Caco-2 (cell line): ENCODE measurements at regions of chr6 and their contacts with region 1.

Region 1: DNA sequence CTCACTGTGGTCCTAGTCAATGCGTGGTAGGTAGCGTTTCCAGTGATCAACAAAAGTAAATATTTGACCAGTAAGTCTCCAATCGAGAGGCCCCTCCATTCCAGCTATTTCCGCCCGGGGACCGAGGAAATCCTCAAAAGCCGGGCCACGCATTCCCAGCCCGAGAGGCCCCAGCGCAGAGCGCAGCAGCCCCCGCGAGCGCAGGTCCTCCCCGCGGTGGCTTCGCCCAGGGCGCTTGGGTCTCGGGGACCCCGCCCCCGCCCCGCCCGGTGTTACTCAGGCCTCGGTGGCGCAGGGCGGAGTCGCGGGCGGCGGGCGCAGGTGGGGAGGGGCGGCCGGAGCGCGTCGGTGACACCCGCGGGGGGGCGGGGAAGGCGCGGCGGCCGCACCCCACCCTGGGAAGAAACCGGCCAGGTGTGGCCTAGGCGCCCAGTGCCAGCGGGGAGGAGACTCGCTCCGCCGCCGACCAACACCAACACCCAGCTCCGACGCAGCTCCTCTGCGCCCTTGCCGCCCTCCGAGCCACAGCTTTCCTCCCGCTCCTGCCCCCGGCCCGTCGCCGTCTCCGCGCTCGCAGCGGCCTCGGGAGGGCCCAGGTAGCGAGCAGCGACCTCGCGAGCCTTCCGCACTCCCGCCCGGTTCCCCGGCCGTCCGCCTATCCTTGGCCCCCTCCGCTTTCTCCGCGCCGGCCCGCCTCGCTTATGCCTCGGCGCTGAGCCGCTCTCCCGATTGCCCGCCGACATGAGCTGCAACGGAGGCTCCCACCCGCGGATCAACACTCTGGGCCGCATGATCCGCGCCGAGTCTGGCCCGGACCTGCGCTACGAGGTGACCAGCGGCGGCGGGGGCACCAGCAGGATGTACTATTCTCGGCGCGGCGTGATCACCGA is at the start of gene DSP:
- DNase-seq: peak; percentile 90 to 93
- H3K4me3 ChIP-seq: peak within 1 kb of the TSS; percentile 95
- H3K4me3 Mint-ChIP-seq: peak within 1 kb of the TSS; percentile 92
- H3K27ac Mint-ChIP-seq: peak within 1 kb of the TSS; percentile 91
- H3K4me1 ChIP-seq: peaks cover 51% of the 10 kb centered on the region
- H3K4me1 Mint-ChIP-seq: peaks cover 40% of the 10 kb centered on the region
- H3K27me3 ChIP-seq: no peaks in the 10 kb centered on the region
- H3K27me3 Mint-ChIP-seq: no peaks in the 10 kb centered on the region
- CTCF ChIP-seq: no peak
- total RNA-seq, gene DSP: 191 and 193 TPM in 2 replicates

Region 2: GRCh38 chr6:7446619-7447325 is 94.6 kb before region 1 on chr6:
- CTCF ChIA-PET with region 1: no interaction called
- POLR2A ChIA-PET with region 1: interaction called, 14 read pairs
- intact Hi-C with region 1: no loop called
- DNase-seq: no peak
- H3K4me3 ChIP-seq: no peak overlapping the region
- H3K4me3 Mint-ChIP-seq: no peak overlapping the region
- H3K27ac Mint-ChIP-seq: peak overlapping the region; percentile 53
- H3K4me1 ChIP-seq: 0 out of 2 replicates have a peak, but pooled peaks cover 8% of the 10 kb centered on the region
- H3K4me1 Mint-ChIP-seq: peaks cover 15% of the 10 kb centered on the region
- H3K27me3 ChIP-seq: no peaks in the 10 kb centered on the region
- H3K27me3 Mint-ChIP-seq: no peaks in the 10 kb centered on the region
- CTCF ChIP-seq: no peak

Region 3: DNA sequence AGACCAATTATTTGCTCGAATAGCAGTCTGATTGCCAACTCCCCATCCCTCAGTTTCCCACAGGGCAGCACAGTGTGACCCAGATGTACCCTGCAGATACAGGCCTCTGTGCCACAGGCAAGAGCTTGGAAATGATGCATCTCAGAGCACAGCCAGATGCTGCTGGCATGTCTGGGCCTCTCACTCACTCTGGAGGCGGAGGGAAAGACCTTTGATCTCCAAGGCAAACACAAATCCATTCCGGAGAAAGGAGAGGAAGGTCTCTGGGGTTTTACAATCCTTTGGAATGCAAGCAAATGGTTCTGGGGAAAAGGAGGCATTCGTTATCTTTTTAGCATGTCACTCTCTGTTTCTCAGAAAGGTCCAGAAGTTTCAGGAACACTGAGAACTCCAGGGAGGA is 77.6 kb before region 1 on chr6:
- CTCF ChIA-PET with region 1: no interaction called
- POLR2A ChIA-PET with region 1: interaction called, 5 read pairs
- intact Hi-C with region 1: loop called (anchors 2 kb)
- DNase-seq: peak; percentile 88 to 92
- H3K4me3 ChIP-seq: no peak overlapping the region
- H3K4me3 Mint-ChIP-seq: no peak overlapping the region
- H3K27ac Mint-ChIP-seq: peak overlapping the region; percentile 93
- H3K4me1 ChIP-seq: peaks cover 71% of the 10 kb centered on the region
- H3K4me1 Mint-ChIP-seq: peaks cover 48% of the 10 kb centered on the region
- H3K27me3 ChIP-seq: no peaks in the 10 kb centered on the region
- H3K27me3 Mint-ChIP-seq: no peaks in the 10 kb centered on the region
- CTCF ChIP-seq: no peak

Region 4: GRCh38 chr6:7473805-7474719 is 67.4 kb before region 1 on chr6:
- CTCF ChIA-PET with region 1: no interaction called
- POLR2A ChIA-PET with region 1: no interaction called
- intact Hi-C with region 1: no loop called
- DNase-seq: no peak
- H3K4me3 ChIP-seq: no peak overlapping the region
- H3K4me3 Mint-ChIP-seq: no peak overlapping the region
- H3K27ac Mint-ChIP-seq: peak overlapping the region; percentile 34
- H3K4me1 ChIP-seq: no peaks in the 10 kb centered on the region; the same call in none of the 2 replicates
- H3K4me1 Mint-ChIP-seq: peaks cover 17% of the 10 kb centered on the region
- H3K27me3 ChIP-seq: no peaks in the 10 kb centered on the region
- H3K27me3 Mint-ChIP-seq: no peaks in the 10 kb centered on the region
- CTCF ChIP-seq: no peak

Region 5: DNA sequence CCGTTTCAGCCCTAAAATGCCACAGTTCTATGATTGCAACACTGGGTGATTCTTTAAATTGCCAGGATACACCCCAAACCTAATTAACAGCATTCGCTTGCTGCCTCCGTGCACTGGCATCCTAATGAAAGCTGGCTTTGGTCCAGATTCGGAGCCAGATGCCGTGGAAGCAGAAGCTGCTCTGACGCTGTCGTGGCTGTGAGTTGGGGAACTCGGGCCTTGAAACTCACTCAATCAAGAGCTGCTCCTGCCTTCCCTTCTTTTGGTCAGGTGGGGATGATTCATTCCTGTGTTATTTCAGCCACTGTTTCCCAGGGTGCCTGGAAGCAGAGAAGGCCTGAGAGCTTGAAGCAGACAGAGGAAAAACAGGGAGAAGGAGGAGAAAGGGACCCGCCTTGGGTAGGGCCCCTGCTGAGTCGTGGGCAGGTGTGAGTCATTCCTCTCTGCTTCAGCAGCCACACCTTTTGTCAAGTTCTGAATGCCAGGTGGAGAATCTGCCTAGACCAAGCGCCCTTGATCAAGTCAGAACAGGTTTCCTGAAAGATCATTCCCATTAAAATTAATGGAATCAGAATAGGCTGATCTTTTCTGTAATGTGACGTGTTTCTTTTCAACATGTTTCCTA is 36.1 kb before region 1 on chr6:
- CTCF ChIA-PET with region 1: no interaction called
- POLR2A ChIA-PET with region 1: interaction called, 4 read pairs
- intact Hi-C with region 1: loop called (anchors 5 kb)
- DNase-seq: peak; percentile 76 to 86
- H3K4me3 ChIP-seq: no peak overlapping the region
- H3K4me3 Mint-ChIP-seq: peak overlapping the region; percentile 58
- H3K27ac Mint-ChIP-seq: peak overlapping the region; percentile 89
- H3K4me1 ChIP-seq: peaks cover 26% of the 10 kb centered on the region
- H3K4me1 Mint-ChIP-seq: peaks cover 17% of the 10 kb centered on the region
- H3K27me3 ChIP-seq: no peaks in the 10 kb centered on the region
- H3K27me3 Mint-ChIP-seq: no peaks in the 10 kb centered on the region
- CTCF ChIP-seq: no peak

Region 6: DNA sequence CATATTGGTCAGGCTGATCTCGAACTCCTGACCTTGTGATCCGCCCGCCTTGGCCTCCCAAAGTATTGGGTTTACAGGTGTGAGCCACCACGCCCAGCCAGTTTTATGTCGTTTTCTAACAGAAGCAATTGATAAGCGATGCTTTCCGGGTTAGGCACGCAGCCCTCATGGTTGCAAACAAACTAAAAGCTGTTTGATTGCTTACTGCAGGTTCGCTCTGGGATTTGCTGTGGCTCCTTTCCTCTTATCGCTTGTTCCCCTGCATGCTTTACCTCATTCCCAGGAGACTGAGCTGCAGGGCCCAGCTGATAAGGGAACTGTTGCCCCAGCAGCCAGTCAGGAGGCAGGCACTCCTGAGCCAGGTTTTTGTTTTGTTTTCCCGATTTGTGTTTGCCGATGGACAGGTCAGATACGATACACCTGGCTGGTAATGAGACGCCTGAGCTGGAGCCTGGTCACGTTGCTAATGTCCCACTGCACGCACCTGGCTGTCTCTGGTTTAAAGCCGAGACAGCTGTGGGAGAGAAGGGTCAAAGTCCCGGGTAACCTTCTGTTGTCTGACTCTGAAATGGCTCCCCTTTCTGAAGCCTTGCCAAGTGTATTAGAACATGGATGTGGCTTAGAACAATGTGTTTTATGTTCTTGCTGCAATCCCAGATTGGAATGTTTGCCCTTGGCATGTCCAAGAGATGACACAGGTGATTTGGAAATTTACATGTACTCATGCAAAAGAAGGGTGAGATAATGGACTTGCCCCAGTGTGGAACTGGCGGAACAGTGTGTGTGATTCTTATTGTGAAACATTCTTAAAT is 19.9 kb after region 1 on chr6:
- CTCF ChIA-PET with region 1: no interaction called
- POLR2A ChIA-PET with region 1: interaction called, 13 read pairs
- intact Hi-C with region 1: loop called (anchors 1 kb)
- DNase-seq: peak; percentile 95 to 97
- H3K4me3 ChIP-seq: no peak overlapping the region
- H3K4me3 Mint-ChIP-seq: peak overlapping the region; percentile 68
- H3K27ac Mint-ChIP-seq: peak overlapping the region; percentile 94
- H3K4me1 ChIP-seq: peaks cover 40% of the 10 kb centered on the region
- H3K4me1 Mint-ChIP-seq: peaks cover 30% of the 10 kb centered on the region
- H3K27me3 ChIP-seq: no peaks in the 10 kb centered on the region
- H3K27me3 Mint-ChIP-seq: no peaks in the 10 kb centered on the region
- CTCF ChIP-seq: no peak

Region 7: DNA sequence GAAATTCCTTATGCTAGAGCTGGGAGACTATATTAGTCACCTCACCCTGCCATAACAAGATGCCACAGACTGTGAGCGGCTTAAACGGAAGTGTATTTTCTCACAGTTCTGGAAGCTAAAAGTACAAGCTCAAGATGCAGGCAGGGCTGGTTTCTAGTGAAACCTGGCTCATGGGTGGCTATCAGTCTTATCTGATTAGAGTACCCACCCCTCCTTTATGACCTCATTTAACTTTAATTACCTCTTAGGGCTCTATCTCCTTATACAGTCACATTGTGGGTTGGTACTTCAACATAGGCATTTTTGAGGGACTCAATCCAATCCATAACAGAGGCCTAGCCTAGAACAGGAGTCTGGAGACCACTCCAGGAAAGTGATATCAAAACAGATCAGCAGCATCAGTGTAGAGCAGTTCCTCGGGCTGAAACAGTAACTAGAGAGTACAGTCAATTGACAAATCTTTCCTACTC is 46.2 kb after region 1 on chr6:
- CTCF ChIA-PET with region 1: no interaction called
- POLR2A ChIA-PET with region 1: interaction called, 3 read pairs
- intact Hi-C with region 1: loop called (anchors 1 kb)
- DNase-seq: peak; percentile 13 to 39
- H3K4me3 ChIP-seq: no peak overlapping the region
- H3K4me3 Mint-ChIP-seq: no peak overlapping the region
- H3K27ac Mint-ChIP-seq: peak overlapping the region; percentile 55
- H3K4me1 ChIP-seq: peaks cover 23% of the 10 kb centered on the region
- H3K4me1 Mint-ChIP-seq: peaks cover 39% of the 10 kb centered on the region
- H3K27me3 ChIP-seq: no peaks in the 10 kb centered on the region
- H3K27me3 Mint-ChIP-seq: no peaks in the 10 kb centered on the region
- CTCF ChIP-seq: no peak

Region 8: GRCh38 chr6:7691675-7692452 is 150.4 kb after region 1 on chr6:
- CTCF ChIA-PET with region 1: no interaction called
- POLR2A ChIA-PET with region 1: no interaction called
- intact Hi-C with region 1: no loop called
- DNase-seq: peak; percentile 61 to 78
- H3K4me3 ChIP-seq: peak overlapping the region; percentile 29
- H3K4me3 Mint-ChIP-seq: peak overlapping the region; percentile 64
- H3K27ac Mint-ChIP-seq: peak overlapping the region; percentile 65
- H3K4me1 ChIP-seq: peaks cover 21% of the 10 kb centered on the region
- H3K4me1 Mint-ChIP-seq: no peaks in the 10 kb centered on the region
- H3K27me3 ChIP-seq: no peaks in the 10 kb centered on the region
- H3K27me3 Mint-ChIP-seq: no peaks in the 10 kb centered on the region
- CTCF ChIP-seq: no peak